ENCODE measurements at regions of chr12 and their contacts with region 1.

Region 1: GRCh38 chr12:11553871-11554533 is 95.5 kb upstream of the ETV6 start:
- DNase-seq: peak; percentile 71
- CTCF ChIP-seq: peak; percentile 16

Region 2: GRCh38 chr12:11746024-11746771 is 192.2 kb after region 1 on chr12:
- in situ Hi-C with region 1: loop called (anchors 10 kb)
- DNase-seq: no peak
- CTCF ChIP-seq: no peak

Region 3: GRCh38 chr12:12334367-12335040 is 780.5 kb after region 1 on chr12:
- in situ Hi-C with region 1: loop called (anchors 25 kb)
- DNase-seq: peak; percentile 85
- CTCF ChIP-seq: peak; percentile 83

Measured in GM13976 (cell line).